Prostate gland (tissue), 2 donors: ENCODE measurements at regions of chr5 and their contacts with region 1.

Region 1: GRCh38 chr5:55534436-55535198 is at the start of gene PLPP1:
- DNase-seq: peak; percentile 95
- H3K4me3 ChIP-seq: peak within 1 kb of the TSS; percentile 82 to 99
- H3K27ac ChIP-seq: peak within 1 kb of the TSS; percentile 96 to 99
- H3K4me1 ChIP-seq: no peaks in the 10 kb centered on the region
- H3K27me3 ChIP-seq: no peaks in the 10 kb centered on the region
- CTCF ChIP-seq: peak in 2 of 4 experiments; percentile 6 to 8
- POLR2A ChIP-seq: peak; percentile 92
- total RNA-seq, gene PLPP1: 823 to 5,059 TPM

Region 2: GRCh38 chr5:55254802-55255201 is 279.8 kb before region 1 on chr5:
- intact Hi-C with region 1: no loop called
- DNase-seq: no peak
- H3K4me3 ChIP-seq: no peak overlapping the region
- H3K27ac ChIP-seq: no peak overlapping the region
- H3K4me1 ChIP-seq: no peaks in the 10 kb centered on the region
- H3K27me3 ChIP-seq: no peaks in the 10 kb centered on the region
- CTCF ChIP-seq: no peak
- POLR2A ChIP-seq: no peak

Region 3: DNA sequence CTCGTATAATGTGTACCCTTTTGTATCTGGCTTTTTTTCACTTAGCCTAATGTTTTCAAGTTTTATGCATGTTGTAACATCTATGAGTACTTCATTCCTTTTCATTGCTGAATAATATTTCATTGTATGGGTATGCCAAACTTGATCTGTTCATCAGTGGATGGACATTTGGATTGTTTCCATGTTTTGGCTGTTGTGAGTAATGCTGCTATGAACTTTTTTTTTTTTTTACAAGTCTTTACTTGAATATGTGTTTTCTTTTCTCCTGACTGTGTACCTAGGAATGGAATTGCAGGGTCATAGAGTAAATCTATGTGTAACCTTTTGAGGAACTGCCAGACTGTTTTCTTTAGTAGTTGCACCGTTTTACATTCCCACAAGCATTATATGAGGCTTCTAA is 174.4 kb before region 1 on chr5:
- intact Hi-C with region 1: no loop called
- DNase-seq: no peak
- H3K4me3 ChIP-seq: no peak overlapping the region
- H3K27ac ChIP-seq: no peak overlapping the region
- H3K4me1 ChIP-seq: no peaks in the 10 kb centered on the region
- H3K27me3 ChIP-seq: no peaks in the 10 kb centered on the region
- CTCF ChIP-seq: no peak
- POLR2A ChIP-seq: no peak

Region 4: GRCh38 chr5:55439008-55439407 is 95.6 kb before region 1 on chr5:
- intact Hi-C with region 1: loop called (anchors 2 kb)
- DNase-seq: no peak
- H3K4me3 ChIP-seq: no peak overlapping the region
- H3K27ac ChIP-seq: peak overlapping the region; percentile 71 to 75
- H3K4me1 ChIP-seq: peaks cover 14% of the 10 kb centered on the region
- H3K27me3 ChIP-seq: no peaks in the 10 kb centered on the region
- CTCF ChIP-seq: no peak
- POLR2A ChIP-seq: no peak

Region 5: GRCh38 chr5:55601204-55601618 is 66.6 kb after region 1 on chr5:
- intact Hi-C with region 1: loop called (anchors 2 kb)
- DNase-seq: peak; percentile 95
- H3K4me3 ChIP-seq: no peak overlapping the region
- H3K27ac ChIP-seq: peak overlapping the region; percentile 90 to 96
- H3K4me1 ChIP-seq: peaks cover 20% of the 10 kb centered on the region
- H3K27me3 ChIP-seq: no peaks in the 10 kb centered on the region
- CTCF ChIP-seq: peak in 1 of 4 experiments; percentile 3
- POLR2A ChIP-seq: no peak

Region 6: DNA sequence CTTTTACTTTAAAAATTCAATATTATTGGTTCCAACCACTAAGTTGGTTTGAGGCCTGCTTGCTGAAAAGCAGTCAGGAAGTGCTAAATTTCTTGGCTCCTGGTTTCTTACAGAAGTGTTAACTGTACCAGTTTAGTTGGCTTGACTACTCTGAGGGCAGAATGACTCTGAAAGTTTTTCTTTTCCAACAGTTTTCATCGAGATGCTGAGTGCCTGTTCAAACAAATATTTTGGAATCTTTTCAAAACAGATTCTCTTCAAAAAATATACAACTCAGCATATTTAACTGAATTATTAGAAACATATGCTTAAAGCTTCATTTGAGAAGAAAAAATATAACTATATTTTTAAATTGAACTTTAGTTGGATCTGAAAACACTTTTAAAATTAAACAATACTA is 140.5 kb after region 1 on chr5:
- intact Hi-C with region 1: loop called (anchors 10 kb)
- DNase-seq: no peak
- H3K4me3 ChIP-seq: no peak overlapping the region
- H3K27ac ChIP-seq: no peak overlapping the region
- H3K4me1 ChIP-seq: no peaks in the 10 kb centered on the region
- H3K27me3 ChIP-seq: no peaks in the 10 kb centered on the region
- CTCF ChIP-seq: no peak
- POLR2A ChIP-seq: no peak